MCF 10A (cell line): ENCODE measurements at regions of chr7 and their contacts with region 1.

Region 1: GRCh38 chr7:46558482-46559193 is 637.6 kb upstream of the IGFBP3 start:
- DNase-seq: peak; percentile 41
- H3K4me3 Mint-ChIP-seq: no peak overlapping the region
- H3K27ac Mint-ChIP-seq: peak overlapping the region; percentile 50
- H3K4me1 Mint-ChIP-seq: peaks cover 26% of the 10 kb centered on the region
- H3K27me3 Mint-ChIP-seq: no peaks in the 10 kb centered on the region
- CTCF ChIP-seq: no peak

Region 2: DNA sequence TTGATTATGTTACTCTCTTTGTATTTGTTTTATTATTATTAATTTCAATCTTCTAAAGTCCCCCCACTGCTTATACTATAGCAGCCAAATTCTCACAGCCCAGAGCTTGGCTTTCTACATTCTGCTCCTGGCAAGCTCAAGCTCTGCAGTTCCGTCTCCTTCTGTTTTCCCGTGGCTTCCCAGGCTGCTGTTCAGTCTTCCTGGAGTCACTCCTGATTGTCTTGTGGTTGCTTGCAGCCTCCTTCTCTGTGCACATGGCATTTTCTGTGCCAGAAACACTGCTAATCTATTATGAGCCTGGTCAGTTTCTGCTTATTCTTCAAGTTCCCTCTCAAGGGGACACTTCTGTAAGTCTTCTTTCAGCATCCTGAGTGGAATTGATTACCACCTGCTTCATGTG is 103.8 kb before region 1 on chr7:
- CTCF ChIA-PET with region 1: no interaction called
- POLR2A ChIA-PET with region 1: no interaction called
- intact Hi-C with region 1: loop called (anchors 5 kb)
- DNase-seq: no peak
- H3K4me3 Mint-ChIP-seq: no peak overlapping the region
- H3K27ac Mint-ChIP-seq: peak overlapping the region; percentile 92
- H3K4me1 Mint-ChIP-seq: peaks cover 33% of the 10 kb centered on the region
- H3K27me3 Mint-ChIP-seq: no peaks in the 10 kb centered on the region
- CTCF ChIP-seq: no peak

Region 3: GRCh38 chr7:46651073-46651472 is 92.4 kb after region 1 on chr7:
- CTCF ChIA-PET with region 1: no interaction called
- POLR2A ChIA-PET with region 1: interaction called, 10 read pairs
- intact Hi-C with region 1: no loop called
- DNase-seq: peak; percentile 82
- H3K4me3 Mint-ChIP-seq: peak overlapping the region; percentile 56
- H3K27ac Mint-ChIP-seq: peak overlapping the region; percentile 96
- H3K4me1 Mint-ChIP-seq: peaks cover 24% of the 10 kb centered on the region
- H3K27me3 Mint-ChIP-seq: no peaks in the 10 kb centered on the region
- CTCF ChIP-seq: no peak